ENCODE measurements at regions of chr11 and their contacts with region 1.

Region 1: GRCh38 chr11:27370374-27370773 is 7.4 kb upstream of the CCDC34 start:
- DNase-seq: no peak
- ATAC-seq: no peak
- H3K4me3 ChIP-seq: no peak overlapping the region
- H3K4me3 Mint-ChIP-seq: no peak overlapping the region
- H3K27ac ChIP-seq: no peak overlapping the region
- H3K27ac Mint-ChIP-seq: no peak overlapping the region
- H3K4me1 ChIP-seq: no peaks in the 10 kb centered on the region
- H3K4me1 Mint-ChIP-seq: no peaks in the 10 kb centered on the region
- H3K27me3 ChIP-seq: no peaks in the 10 kb centered on the region
- H3K27me3 Mint-ChIP-seq: no peaks in the 10 kb centered on the region
- CTCF ChIP-seq: no peak

Region 2: GRCh38 chr11:27429761-27430412 is 59.5 kb after region 1 on chr11:
- CTCF ChIA-PET with region 1: no interaction called
- POLR2A ChIA-PET with region 1: no interaction called
- intact Hi-C with region 1: loop called in 1 of 2 experiments (anchors 10 kb)
- DNase-seq: no peak
- ATAC-seq: no peak
- H3K4me3 ChIP-seq: no peak overlapping the region
- H3K4me3 Mint-ChIP-seq: no peak overlapping the region
- H3K27ac ChIP-seq: no peak overlapping the region
- H3K27ac Mint-ChIP-seq: no peak overlapping the region
- H3K4me1 ChIP-seq: no peaks in the 10 kb centered on the region
- H3K4me1 Mint-ChIP-seq: no peaks in the 10 kb centered on the region
- H3K27me3 ChIP-seq: no peaks in the 10 kb centered on the region
- H3K27me3 Mint-ChIP-seq: peaks cover 10% of the 10 kb centered on the region
- CTCF ChIP-seq: no peak